HepG2 (cell line): ENCODE measurements at regions of chr7 and their contacts with region 1.

Region 1: DNA sequence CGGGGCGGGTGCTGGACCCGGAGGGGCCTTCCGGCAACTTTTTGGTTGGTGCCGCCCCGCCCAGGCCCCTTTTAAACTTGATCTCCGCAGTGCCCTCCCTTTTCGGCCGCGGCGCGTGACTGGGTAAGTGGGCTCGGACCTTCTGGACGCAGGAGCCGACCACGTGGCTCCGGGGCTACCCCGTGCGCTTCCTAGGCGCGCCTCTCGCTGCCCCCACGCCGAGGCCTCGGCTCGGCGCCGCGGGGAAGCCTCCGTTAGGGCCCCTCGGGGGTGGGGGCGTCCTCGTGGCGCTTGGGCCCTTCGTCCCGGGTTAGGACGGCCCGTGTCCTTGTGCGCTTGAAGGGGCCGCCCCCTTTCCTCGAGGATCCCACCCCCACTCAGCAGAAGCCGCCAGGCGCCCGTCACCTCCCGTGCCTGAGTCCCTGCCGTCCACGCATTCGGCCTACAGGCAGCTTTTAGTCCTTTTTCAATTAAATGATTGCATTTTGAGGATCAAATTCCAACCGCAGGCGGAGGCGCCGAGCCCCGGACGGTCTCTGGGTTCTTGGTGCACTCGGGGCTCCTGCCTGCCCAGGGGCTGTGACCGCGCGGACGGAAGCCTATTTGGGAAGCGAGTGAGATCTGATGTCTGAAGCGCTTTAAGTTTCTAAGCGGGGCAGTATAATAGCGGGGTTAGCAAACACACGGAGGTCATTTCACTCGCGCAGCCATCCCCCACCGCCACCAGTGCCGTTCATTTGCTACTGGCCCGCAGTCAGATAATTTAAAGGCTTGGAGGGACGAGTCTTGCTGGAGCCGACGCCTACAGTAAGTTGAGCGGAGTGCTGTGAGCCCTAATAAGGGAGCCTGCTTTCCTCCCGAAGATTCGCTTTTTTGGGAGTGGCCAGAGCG is 31.8 kb upstream of the TOMM7 start:
- DNase-seq: peak; percentile 74
- ATAC-seq: peak; percentile 84
- H3K4me3 ChIP-seq: peak overlapping the region; percentile 51 to 79 (median 79)
- H3K27ac ChIP-seq: peak overlapping the region; percentile 69
- H3K4me1 ChIP-seq: peaks cover 32% of the 10 kb centered on the region
- H3K27me3 ChIP-seq: peaks cover 0 to 21% of the 10 kb centered on the region in 2 experiments; a peak in 3 of 5 replicates
- CTCF ChIP-seq: peak; percentile 41
- EP300 ChIP-seq: 0 out of 4 replicates have a peak, but pooled peaks of 1 of the 2 experiments have one; percentile 5
- POLR2A ChIP-seq: peak; percentile 56 to 71; a peak in 3 of 4 replicates
- RAD21 ChIP-seq: peak; percentile 51; the same call in 1 of the 2 replicates

Region 2: DNA sequence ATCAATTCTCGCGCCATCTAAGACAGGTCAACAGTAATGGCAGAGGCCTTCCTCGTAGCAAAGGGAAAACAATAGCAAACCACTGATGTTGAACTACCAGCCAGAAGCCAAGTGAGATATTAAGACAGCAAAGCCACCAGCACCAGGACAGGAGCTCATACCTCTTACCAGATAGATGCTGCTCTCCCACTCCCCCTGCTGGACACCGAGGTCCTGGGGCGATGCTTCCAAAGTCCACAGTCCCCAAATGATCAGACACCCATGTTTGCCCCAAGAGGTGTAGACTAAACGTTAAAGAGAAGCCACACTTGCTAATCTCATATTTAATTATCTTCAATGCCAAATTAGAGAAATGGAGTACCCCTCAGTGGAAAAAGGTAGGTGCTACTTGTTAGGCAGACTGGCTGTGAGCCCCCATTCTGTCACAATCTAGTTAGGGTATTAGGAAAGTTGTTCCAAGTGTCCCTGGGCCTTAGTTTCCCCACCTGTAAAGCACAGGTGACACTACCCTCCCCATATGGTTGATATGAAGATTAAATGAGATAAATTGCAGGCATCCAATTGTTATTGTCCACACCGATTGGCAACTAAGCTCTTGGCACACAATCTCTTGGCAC is 71.7 kb before region 1 on chr7:
- CTCF ChIA-PET with region 1: no interaction called
- POLR2A ChIA-PET with region 1: interaction called, 7 read pairs
- in situ Hi-C with region 1: no loop called
- intact Hi-C with region 1: loop called (anchors 1 kb)
- DNase-seq: peak; percentile 44
- ATAC-seq: peak; percentile 30
- H3K4me3 ChIP-seq: no peak overlapping the region
- H3K27ac ChIP-seq: no peak overlapping the region
- H3K4me1 ChIP-seq: peaks cover 55% of the 10 kb centered on the region
- H3K27me3 ChIP-seq: no peaks in the 10 kb centered on the region
- CTCF ChIP-seq: peak; percentile 68
- EP300 ChIP-seq: no peak
- POLR2A ChIP-seq: no peak
- RAD21 ChIP-seq: peak; percentile 50; the same call in 1 of the 2 replicates

Region 3: DNA sequence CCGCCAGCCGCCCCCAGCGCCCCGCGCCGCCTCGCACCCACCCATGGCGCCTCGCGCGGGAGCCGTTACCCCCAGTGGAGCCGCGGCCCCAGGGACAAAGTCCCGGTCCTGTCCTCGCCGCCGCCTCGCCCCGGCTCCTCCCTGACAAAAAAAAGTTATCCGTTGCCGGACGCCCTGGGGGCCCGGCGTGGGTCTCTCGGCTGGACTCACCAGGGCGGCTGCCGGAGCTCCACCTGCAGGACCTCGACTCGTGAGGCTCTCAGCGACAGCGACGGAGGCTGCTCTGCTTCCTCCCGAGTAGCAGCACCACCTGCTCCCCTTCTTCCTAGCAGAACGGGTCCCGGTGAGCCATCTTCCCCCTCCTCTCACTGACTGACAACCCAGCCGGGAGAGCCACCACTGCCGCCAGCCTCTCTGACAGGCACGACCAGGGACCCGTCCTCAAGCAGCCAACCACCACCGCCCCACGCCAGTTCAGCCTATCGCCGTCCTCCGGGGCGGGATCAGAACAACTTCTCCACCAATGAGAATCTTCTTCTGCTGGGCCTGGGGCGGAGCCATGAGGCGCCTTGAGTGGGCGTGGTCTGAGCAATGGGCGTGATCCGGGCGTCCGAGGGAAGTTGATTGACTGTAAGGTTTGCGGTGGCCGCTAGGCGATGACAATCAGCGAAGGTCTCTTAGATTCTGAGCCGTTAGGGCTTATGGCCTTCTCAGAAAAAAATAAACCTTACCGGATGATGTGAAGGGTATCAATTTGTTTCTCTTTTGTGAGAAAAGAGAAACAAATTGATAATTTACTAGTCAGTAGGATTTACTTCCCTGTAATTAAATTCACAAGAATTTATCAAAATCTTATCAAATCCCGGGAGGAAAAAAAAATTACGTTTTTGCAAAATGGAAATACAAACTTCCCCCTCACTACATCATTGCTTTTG is 159.6 kb after region 1 on chr7 and contains the start of gene HYCC1:
- CTCF ChIA-PET with region 1: no interaction called
- POLR2A ChIA-PET with region 1: no interaction called
- in situ Hi-C with region 1: no loop called
- intact Hi-C with region 1: loop called (anchors 2 kb)
- DNase-seq: peak; percentile 96
- ATAC-seq: peak; percentile 98
- H3K4me3 ChIP-seq: peak within 1 kb of the TSS; percentile 88 to 91 (median 88)
- H3K27ac ChIP-seq: peak within 1 kb of the TSS; percentile 70
- H3K4me1 ChIP-seq: peaks cover 65% of the 10 kb centered on the region
- H3K27me3 ChIP-seq: no peaks in the 10 kb centered on the region
- CTCF ChIP-seq: peak; percentile 64
- EP300 ChIP-seq: no peak
- POLR2A ChIP-seq: peak; percentile 96 to 99
- RAD21 ChIP-seq: no peak
- total RNA-seq, gene HYCC1: 41.8 and 52.2 TPM in 2 replicates

Region 4: GRCh38 chr7:23055582-23056178 is 201.3 kb after region 1 on chr7:
- CTCF ChIA-PET with region 1: interaction called, 4 read pairs
- POLR2A ChIA-PET with region 1: no interaction called
- in situ Hi-C with region 1: loop called (anchors 10 kb)
- intact Hi-C with region 1: loop called (anchors 5 kb)
- DNase-seq: peak; percentile 52
- ATAC-seq: peak; percentile 86
- H3K4me3 ChIP-seq: no peak overlapping the region
- H3K27ac ChIP-seq: no peak overlapping the region
- H3K4me1 ChIP-seq: no peaks in the 10 kb centered on the region
- H3K27me3 ChIP-seq: no peaks in the 10 kb centered on the region
- CTCF ChIP-seq: peak; percentile 88
- EP300 ChIP-seq: no peak
- POLR2A ChIP-seq: no peak
- RAD21 ChIP-seq: peak; percentile 82